ENCODE measurements at regions of chr10 and their contacts with region 1.

Region 1: GRCh38 chr10:112434988-112435619 is 11.6 kb downstream of the ZDHHC6 start:
- DNase-seq: peak; percentile 14
- H3K27ac ChIP-seq: no peak overlapping the region
- CTCF ChIP-seq: peak; percentile 53

Region 2: GRCh38 chr10:112446855-112447711 is 12.0 kb after region 1 on chr10 and contains the starts of genes VTI1A and ZDHHC6:
- CTCF ChIA-PET with region 1: interaction called, 11 read pairs
- POLR2A ChIA-PET with region 1: no interaction called
- DNase-seq: peak; percentile 84
- H3K27ac ChIP-seq: peak within 1 kb of the TSS; percentile 91
- CTCF ChIP-seq: no peak

Measured in RWPE1 (cell line).